ENCODE measurements at regions of chr2 and their contacts with region 1.

Region 1: DNA sequence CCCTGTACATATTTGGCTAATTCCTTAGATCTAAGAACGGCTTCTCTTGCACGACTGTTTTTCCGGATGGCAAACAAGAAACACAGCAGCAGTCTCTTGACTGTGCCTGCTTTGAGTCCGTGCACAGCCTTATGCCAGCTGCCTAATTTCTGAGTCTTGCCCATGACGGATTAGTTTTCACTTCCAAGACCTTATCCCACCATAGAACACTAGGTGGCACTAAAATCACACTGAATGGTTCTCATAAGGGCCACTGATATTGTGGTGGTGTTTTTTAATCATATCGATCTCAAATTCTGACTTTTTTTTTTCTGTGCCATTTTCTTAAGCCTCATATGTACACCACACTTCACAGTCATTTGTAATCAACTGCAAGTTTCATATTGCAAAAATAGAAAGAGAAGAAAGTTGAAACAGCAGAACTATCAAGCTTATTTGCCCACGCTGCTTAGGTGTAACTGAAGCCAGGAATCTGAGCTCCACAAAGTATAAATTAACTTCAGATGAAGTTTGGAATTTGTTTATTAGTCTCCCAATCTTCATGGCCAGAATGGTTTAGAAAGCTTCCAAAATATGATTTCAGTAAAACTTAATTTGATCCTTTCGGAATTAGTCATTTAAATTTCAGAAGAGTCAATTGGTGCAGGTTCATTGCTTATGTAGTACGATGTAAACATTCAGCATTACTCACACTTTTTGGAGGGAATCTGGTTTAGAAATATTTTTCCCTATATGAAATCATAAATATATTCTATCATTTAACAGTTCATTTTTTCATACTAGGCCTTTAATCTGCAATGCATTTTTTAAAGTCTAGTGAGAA is 45.5 kb upstream of the SCN7A start:
- DNase-seq: peak; percentile 71
- H3K4me3 ChIP-seq: no peak overlapping the region
- H3K27ac ChIP-seq: no peak overlapping the region
- H3K4me1 ChIP-seq: no peaks in the 10 kb centered on the region
- H3K27me3 ChIP-seq: peaks cover 4% of the 10 kb centered on the region in 2 experiments
- CTCF ChIP-seq: peak; percentile 60 to 61
- POLR2A ChIP-seq: no peak

Region 2: GRCh38 chr2:166384774-166385173 is 154.8 kb before region 1 on chr2:
- CTCF ChIA-PET with region 1: no interaction called
- POLR2A ChIA-PET with region 1: no interaction called
- dilution Hi-C with region 1: no loop called
- intact Hi-C with region 1: no loop called
- DNase-seq: peak; percentile 58
- H3K4me3 ChIP-seq: no peak overlapping the region
- H3K27ac ChIP-seq: no peak overlapping the region
- H3K4me1 ChIP-seq: peaks cover 14% of the 10 kb centered on the region
- H3K27me3 ChIP-seq: peaks cover 6 to 10% of the 10 kb centered on the region in 2 experiments
- CTCF ChIP-seq: peak; percentile 32 to 37
- POLR2A ChIP-seq: no peak

Region 3: GRCh38 chr2:166516712-166517303 is 22.7 kb before region 1 on chr2:
- CTCF ChIA-PET with region 1: interaction called, 11 read pairs
- POLR2A ChIA-PET with region 1: interaction called, 4 read pairs
- dilution Hi-C with region 1: no loop called
- intact Hi-C with region 1: no loop called
- DNase-seq: peak; percentile 61
- H3K4me3 ChIP-seq: no peak overlapping the region
- H3K27ac ChIP-seq: no peak overlapping the region
- H3K4me1 ChIP-seq: no peaks in the 10 kb centered on the region
- H3K27me3 ChIP-seq: no peaks in the 10 kb centered on the region
- CTCF ChIP-seq: peak; percentile 34 to 59
- POLR2A ChIP-seq: no peak

Region 4: DNA sequence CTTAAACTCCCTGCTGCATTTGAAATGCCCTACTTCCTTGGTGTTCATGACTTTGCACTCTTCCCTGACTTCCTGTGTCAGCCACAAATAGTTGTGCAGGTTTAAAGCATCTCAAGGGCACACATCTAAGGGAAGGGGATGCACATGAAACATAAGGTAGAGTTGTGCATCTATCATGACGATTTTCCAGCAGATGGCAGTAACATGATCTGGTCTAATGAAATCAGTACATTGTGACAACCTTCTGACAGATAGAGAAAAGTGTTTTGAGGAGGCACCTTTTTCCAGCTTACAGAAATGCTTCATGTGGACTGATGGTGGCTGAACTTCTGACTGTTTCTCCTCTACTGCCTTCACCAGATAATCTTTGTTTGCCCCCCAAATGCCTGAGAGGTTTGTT is 587.6 kb after region 1 on chr2:
- CTCF ChIA-PET with region 1: no interaction called
- POLR2A ChIA-PET with region 1: no interaction called
- dilution Hi-C with region 1: no loop called
- intact Hi-C with region 1: loop called (anchors 5 kb)
- DNase-seq: peak; percentile 42
- H3K4me3 ChIP-seq: no peak overlapping the region
- H3K27ac ChIP-seq: no peak overlapping the region
- H3K4me1 ChIP-seq: no peaks in the 10 kb centered on the region
- H3K27me3 ChIP-seq: no peaks in the 10 kb centered on the region
- CTCF ChIP-seq: peak in 1 of 2 donors; percentile 10
- POLR2A ChIP-seq: no peak

Region 5: DNA sequence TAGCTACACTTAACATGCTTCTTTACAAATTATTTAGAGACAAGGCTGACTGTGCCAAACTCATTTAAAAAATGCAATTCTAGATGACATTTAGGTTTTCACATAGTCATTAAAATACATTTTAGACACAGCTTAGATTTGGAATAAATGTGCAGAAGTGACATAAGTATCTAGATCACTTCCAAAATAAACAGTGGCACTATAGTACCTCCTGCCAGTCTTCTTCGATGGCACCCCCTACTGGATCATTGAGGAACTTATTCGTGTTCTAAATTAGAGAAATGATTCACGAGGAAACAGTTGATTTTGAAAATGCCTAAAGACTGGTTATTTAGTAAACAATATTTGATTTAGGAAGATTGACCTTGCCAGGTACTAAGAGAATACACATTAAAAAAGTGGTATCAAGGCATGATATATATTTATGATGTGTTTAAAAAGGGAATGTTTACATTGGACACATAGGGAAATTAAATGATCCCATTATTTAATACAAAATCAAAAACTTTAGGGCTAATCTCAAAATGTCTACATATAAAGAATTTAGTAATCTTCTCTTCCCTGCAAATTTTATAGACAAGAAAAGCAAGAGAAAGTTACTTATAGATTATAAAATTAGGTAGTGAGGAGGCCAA is 672.6 kb after region 1 on chr2:
- CTCF ChIA-PET with region 1: interaction called, 25 read pairs
- POLR2A ChIA-PET with region 1: no interaction called
- dilution Hi-C with region 1: no loop called
- intact Hi-C with region 1: loop called (anchors 1 kb)
- DNase-seq: peak; percentile 55
- H3K4me3 ChIP-seq: no peak overlapping the region
- H3K27ac ChIP-seq: no peak overlapping the region
- H3K4me1 ChIP-seq: no peaks in the 10 kb centered on the region
- H3K27me3 ChIP-seq: no peaks in the 10 kb centered on the region
- CTCF ChIP-seq: peak; percentile 17 to 55
- POLR2A ChIP-seq: no peak

Region 6: GRCh38 chr2:167550448-167550847 is 1010.9 kb after region 1 on chr2:
- CTCF ChIA-PET with region 1: interaction called, 5 read pairs
- POLR2A ChIA-PET with region 1: no interaction called
- dilution Hi-C with region 1: no loop called
- intact Hi-C with region 1: loop called (anchors 5 kb)
- DNase-seq: peak; percentile 35
- H3K4me3 ChIP-seq: no peak overlapping the region
- H3K27ac ChIP-seq: no peak overlapping the region
- H3K4me1 ChIP-seq: no peaks in the 10 kb centered on the region
- H3K27me3 ChIP-seq: no peaks in the 10 kb centered on the region
- CTCF ChIP-seq: peak; percentile 14 to 40
- POLR2A ChIP-seq: no peak

Region 7: GRCh38 chr2:167964650-167965413 is 1425.3 kb after region 1 on chr2:
- CTCF ChIA-PET with region 1: no interaction called
- POLR2A ChIA-PET with region 1: no interaction called
- dilution Hi-C with region 1: no loop called
- intact Hi-C with region 1: loop called (anchors 5 kb)
- DNase-seq: peak; percentile 23
- H3K4me3 ChIP-seq: no peak overlapping the region
- H3K27ac ChIP-seq: no peak overlapping the region
- H3K4me1 ChIP-seq: no peaks in the 10 kb centered on the region
- H3K27me3 ChIP-seq: no peaks in the 10 kb centered on the region
- CTCF ChIP-seq: peak in 1 of 2 donors; percentile 9
- POLR2A ChIP-seq: no peak